CD8-positive, alpha-beta T cell (primary cell): ENCODE measurements at regions of chr7 and their contacts with region 1.

Region 1: GRCh38 chr7:23055582-23056178 is 41.8 kb upstream of the HYCC1 start:
- DNase-seq: peak; percentile 18 to 80 (median 50)
- ATAC-seq: peak; percentile 96
- H3K4me3 ChIP-seq: no peak overlapping the region
- H3K4me3 Mint-ChIP-seq: no peak overlapping the region
- H3K27ac ChIP-seq: no peak overlapping the region
- H3K27ac Mint-ChIP-seq: no peak overlapping the region
- H3K4me1 ChIP-seq: no peaks in the 10 kb centered on the region
- H3K4me1 Mint-ChIP-seq: no peaks in the 10 kb centered on the region
- H3K27me3 ChIP-seq: no peaks in the 10 kb centered on the region
- H3K27me3 Mint-ChIP-seq: no peaks in the 10 kb centered on the region
- CTCF ChIP-seq: peak; percentile 99

Region 2: GRCh38 chr7:22559829-22560489 is 495.7 kb before region 1 on chr7:
- CTCF ChIA-PET with region 1: interaction called, 129 read pairs
- POLR2A ChIA-PET with region 1: no interaction called
- intact Hi-C with region 1: loop called in 1 of 2 experiments (anchors 1 kb)
- DNase-seq: peak; percentile 24 to 77 (median 57)
- ATAC-seq: peak; percentile 88
- H3K4me3 ChIP-seq: no peak overlapping the region
- H3K4me3 Mint-ChIP-seq: no peak overlapping the region
- H3K27ac ChIP-seq: no peak overlapping the region
- H3K27ac Mint-ChIP-seq: no peak overlapping the region
- H3K4me1 ChIP-seq: peaks cover 22% of the 10 kb centered on the region
- H3K4me1 Mint-ChIP-seq: peaks cover 26% of the 10 kb centered on the region
- H3K27me3 ChIP-seq: peaks cover 0 to 4% of the 10 kb centered on the region in 2 experiments
- H3K27me3 Mint-ChIP-seq: peaks cover 18% of the 10 kb centered on the region
- CTCF ChIP-seq: peak; percentile 63

Region 3: GRCh38 chr7:22782616-22783232 is 273.0 kb before region 1 on chr7:
- CTCF ChIA-PET with region 1: interaction called, 22 read pairs
- POLR2A ChIA-PET with region 1: no interaction called
- intact Hi-C with region 1: loop called (anchors 1 to 5 kb)
- DNase-seq: peak; percentile 45 to 75 (median 65)
- ATAC-seq: peak; percentile 67
- H3K4me3 ChIP-seq: no peak overlapping the region
- H3K4me3 Mint-ChIP-seq: no peak overlapping the region
- H3K27ac ChIP-seq: no peak overlapping the region
- H3K27ac Mint-ChIP-seq: no peak overlapping the region
- H3K4me1 ChIP-seq: no peaks in the 10 kb centered on the region
- H3K4me1 Mint-ChIP-seq: no peaks in the 10 kb centered on the region
- H3K27me3 ChIP-seq: no peaks in the 10 kb centered on the region
- H3K27me3 Mint-ChIP-seq: peaks cover 7% of the 10 kb centered on the region
- CTCF ChIP-seq: peak; percentile 75

Region 4: DNA sequence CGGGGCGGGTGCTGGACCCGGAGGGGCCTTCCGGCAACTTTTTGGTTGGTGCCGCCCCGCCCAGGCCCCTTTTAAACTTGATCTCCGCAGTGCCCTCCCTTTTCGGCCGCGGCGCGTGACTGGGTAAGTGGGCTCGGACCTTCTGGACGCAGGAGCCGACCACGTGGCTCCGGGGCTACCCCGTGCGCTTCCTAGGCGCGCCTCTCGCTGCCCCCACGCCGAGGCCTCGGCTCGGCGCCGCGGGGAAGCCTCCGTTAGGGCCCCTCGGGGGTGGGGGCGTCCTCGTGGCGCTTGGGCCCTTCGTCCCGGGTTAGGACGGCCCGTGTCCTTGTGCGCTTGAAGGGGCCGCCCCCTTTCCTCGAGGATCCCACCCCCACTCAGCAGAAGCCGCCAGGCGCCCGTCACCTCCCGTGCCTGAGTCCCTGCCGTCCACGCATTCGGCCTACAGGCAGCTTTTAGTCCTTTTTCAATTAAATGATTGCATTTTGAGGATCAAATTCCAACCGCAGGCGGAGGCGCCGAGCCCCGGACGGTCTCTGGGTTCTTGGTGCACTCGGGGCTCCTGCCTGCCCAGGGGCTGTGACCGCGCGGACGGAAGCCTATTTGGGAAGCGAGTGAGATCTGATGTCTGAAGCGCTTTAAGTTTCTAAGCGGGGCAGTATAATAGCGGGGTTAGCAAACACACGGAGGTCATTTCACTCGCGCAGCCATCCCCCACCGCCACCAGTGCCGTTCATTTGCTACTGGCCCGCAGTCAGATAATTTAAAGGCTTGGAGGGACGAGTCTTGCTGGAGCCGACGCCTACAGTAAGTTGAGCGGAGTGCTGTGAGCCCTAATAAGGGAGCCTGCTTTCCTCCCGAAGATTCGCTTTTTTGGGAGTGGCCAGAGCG is 201.3 kb before region 1 on chr7:
- CTCF ChIA-PET with region 1: interaction called, 15 read pairs
- POLR2A ChIA-PET with region 1: interaction called, 3 read pairs
- intact Hi-C with region 1: loop called (anchors 1 to 2 kb)
- DNase-seq: peak in 8 of 9 experiments; percentile 58 to 89 (median 76)
- ATAC-seq: peak; percentile 79
- H3K4me3 ChIP-seq: peak overlapping the region; percentile 82 to 94
- H3K4me3 Mint-ChIP-seq: peak overlapping the region; percentile 93
- H3K27ac ChIP-seq: peak overlapping the region; percentile 64 to 81
- H3K27ac Mint-ChIP-seq: peak overlapping the region; percentile 93
- H3K4me1 ChIP-seq: peaks cover 11% of the 10 kb centered on the region
- H3K4me1 Mint-ChIP-seq: peaks cover 23% of the 10 kb centered on the region
- H3K27me3 ChIP-seq: no peaks in the 10 kb centered on the region
- H3K27me3 Mint-ChIP-seq: no peaks in the 10 kb centered on the region
- CTCF ChIP-seq: peak; percentile 65

Region 5: GRCh38 chr7:23013715-23014649 is 41.7 kb before region 1 on chr7 and contains the start of gene HYCC1:
- CTCF ChIA-PET with region 1: interaction called, 16 read pairs
- POLR2A ChIA-PET with region 1: no interaction called
- intact Hi-C with region 1: loop called in 1 of 2 experiments (anchors 1 kb)
- DNase-seq: peak; percentile 97 to 99 (median 99)
- ATAC-seq: peak; percentile 97
- H3K4me3 ChIP-seq: peak within 1 kb of the TSS; percentile 65 to 95
- H3K4me3 Mint-ChIP-seq: peak within 1 kb of the TSS; percentile 97
- H3K27ac ChIP-seq: peak within 1 kb of the TSS; percentile 48 to 63
- H3K27ac Mint-ChIP-seq: peak within 1 kb of the TSS; percentile 89
- H3K4me1 ChIP-seq: peaks cover 21% of the 10 kb centered on the region
- H3K4me1 Mint-ChIP-seq: peaks cover 20% of the 10 kb centered on the region
- H3K27me3 ChIP-seq: no peaks in the 10 kb centered on the region
- H3K27me3 Mint-ChIP-seq: peaks cover 3% of the 10 kb centered on the region
- CTCF ChIP-seq: peak; percentile 60
- total RNA-seq, gene HYCC1: 10.7 to 13.5 TPM

Region 6: GRCh38 chr7:23273141-23273599 is 217.5 kb after region 1 on chr7:
- CTCF ChIA-PET with region 1: no interaction called
- POLR2A ChIA-PET with region 1: no interaction called
- intact Hi-C with region 1: no loop called
- DNase-seq: peak; percentile 78 to 91 (median 89)
- ATAC-seq: peak; percentile 97
- H3K4me3 ChIP-seq: peak overlapping the region in 1 of 2 experiments; percentile 16
- H3K4me3 Mint-ChIP-seq: peak overlapping the region; percentile 70
- H3K27ac ChIP-seq: no peak overlapping the region
- H3K27ac Mint-ChIP-seq: no peak overlapping the region
- H3K4me1 ChIP-seq: no peaks in the 10 kb centered on the region
- H3K4me1 Mint-ChIP-seq: peaks cover 4% of the 10 kb centered on the region
- H3K27me3 ChIP-seq: no peaks in the 10 kb centered on the region
- H3K27me3 Mint-ChIP-seq: peaks cover 6% of the 10 kb centered on the region
- CTCF ChIP-seq: peak; percentile 82